Natural killer cell (primary cell): ENCODE measurements at regions of chr10 and their contacts with region 1.

Region 1: DNA sequence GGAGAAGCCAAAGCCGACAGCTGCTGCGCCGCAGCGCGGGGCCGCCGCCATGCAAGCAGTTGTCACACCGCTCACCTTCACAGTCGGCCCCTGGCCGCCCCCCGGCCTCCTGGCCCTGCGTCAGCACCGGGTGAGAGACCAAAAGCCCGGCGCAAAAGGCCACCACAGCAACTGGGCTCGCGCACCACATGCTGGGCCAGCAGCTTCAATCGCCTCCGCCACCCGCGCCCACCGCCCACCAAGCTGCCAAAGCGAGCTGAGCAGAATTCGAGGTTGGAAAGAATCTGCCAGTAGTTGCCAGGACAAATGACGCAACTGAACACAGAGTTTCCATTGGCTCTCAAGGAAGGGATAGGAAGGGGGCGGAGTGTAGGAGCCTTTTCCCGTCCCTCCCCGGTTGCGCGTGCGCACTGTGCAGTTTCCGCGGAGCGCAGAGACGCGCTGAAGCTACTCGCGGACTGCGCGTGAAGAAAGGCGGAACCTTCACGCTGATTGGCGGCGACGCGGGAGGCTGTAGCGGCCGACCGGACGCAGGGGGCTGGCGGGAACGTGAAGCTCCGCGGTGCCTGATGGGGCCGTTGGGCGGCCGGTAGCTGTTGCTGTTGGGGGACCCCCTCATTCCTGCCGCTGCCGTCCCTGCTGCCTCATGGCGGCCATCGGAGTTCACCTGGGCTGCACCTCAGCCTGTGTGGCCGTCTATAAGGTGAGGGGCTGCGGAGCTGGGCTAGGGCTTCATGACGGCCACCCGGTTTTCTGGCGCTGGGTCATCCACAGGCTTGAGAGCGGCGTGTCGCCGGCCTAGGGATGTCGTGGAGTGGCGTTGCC is at the starts of genes CDNF, HSPA14 and MSANTD7:
- DNase-seq: peak; percentile 98 to 100
- ATAC-seq: peak; percentile 92 to 99 (median 93)
- H3K4me3 ChIP-seq: peak within 1 kb of the TSS; percentile 95
- H3K4me3 Mint-ChIP-seq: peak within 1 kb of the TSS; percentile 95
- H3K27ac ChIP-seq: peak within 1 kb of the TSS; percentile 92
- H3K27ac Mint-ChIP-seq: peak within 1 kb of the TSS; percentile 91 to 98
- H3K4me1 ChIP-seq: peaks cover 20% of the 10 kb centered on the region
- H3K4me1 Mint-ChIP-seq: peaks cover 15 to 30% of the 10 kb centered on the region in 2 donors
- H3K27me3 ChIP-seq: no peaks in the 10 kb centered on the region
- H3K27me3 Mint-ChIP-seq: no peaks in the 10 kb centered on the region
- CTCF ChIP-seq: no peak
- total RNA-seq, gene CDNF: 1.8 to 2.2 (median 1.9) TPM
- total RNA-seq, gene HSPA14: 18.9 to 25.6 (median 24.5) TPM
- total RNA-seq, gene MSANTD7: 19.6 to 25.1 (median 24.0) TPM

Region 2: DNA sequence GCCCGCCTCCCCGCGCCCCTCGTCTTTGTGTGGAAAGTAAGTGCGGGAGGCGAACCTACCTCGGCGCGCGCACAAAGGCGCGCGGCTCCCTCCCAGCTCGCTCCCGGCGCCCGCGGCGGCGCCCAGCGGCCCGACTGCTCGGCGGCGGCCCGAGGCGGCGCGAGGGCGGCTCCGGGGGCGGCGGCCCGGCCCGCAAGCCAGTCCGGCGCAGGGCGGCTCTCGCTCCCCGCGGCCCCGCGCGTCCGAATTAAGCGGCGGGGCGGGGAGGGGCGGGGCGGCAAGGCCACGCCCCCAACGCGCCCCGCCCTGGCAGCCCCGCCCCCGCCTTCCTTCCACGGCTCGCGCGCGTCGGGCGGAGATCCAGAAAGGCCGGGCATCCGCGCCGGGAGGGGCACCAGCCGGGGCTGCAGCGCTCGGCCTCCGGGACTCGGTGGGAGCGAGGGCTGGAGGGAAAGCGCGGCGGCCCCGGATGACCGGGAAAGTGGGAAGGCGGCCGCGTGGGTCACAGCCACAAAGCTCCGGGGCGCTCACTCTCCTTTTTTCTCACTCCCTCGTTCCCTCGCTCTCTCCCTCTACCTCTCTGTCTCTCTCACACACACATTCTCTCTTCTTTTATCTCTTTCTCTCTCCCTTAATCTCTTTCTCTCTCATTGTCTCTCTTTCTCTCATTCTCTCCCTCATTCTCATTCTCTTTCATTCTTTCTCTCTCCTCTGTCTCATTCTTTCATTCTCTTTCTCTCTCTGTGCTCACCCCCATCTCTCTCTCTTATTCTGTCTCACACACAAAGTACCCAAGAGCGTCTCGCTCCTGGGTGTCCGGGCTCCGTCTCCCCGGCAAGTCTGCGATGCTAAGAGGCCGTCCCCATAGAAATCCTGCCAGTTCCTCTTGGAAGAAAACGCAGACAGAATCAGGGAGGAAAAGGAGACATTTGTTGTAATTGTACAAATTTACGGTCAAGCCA is 233.5 kb before region 1 on chr10:
- intact Hi-C with region 1: loop called (anchors 5 kb)
- DNase-seq: peak; percentile 72 to 86
- ATAC-seq: peak; percentile 81 to 92 (median 86)
- H3K4me3 ChIP-seq: peak overlapping the region; percentile 48
- H3K4me3 Mint-ChIP-seq: peak overlapping the region; percentile 90
- H3K27ac ChIP-seq: peak overlapping the region; percentile 50
- H3K27ac Mint-ChIP-seq: peak overlapping the region; percentile 57 to 88
- H3K4me1 ChIP-seq: peaks cover 27% of the 10 kb centered on the region
- H3K4me1 Mint-ChIP-seq: peaks cover 55% of the 10 kb centered on the region in 2 donors
- H3K27me3 ChIP-seq: no peaks in the 10 kb centered on the region
- H3K27me3 Mint-ChIP-seq: peaks cover 0 to 3% of the 10 kb centered on the region in 2 donors
- CTCF ChIP-seq: no peak

Region 3: DNA sequence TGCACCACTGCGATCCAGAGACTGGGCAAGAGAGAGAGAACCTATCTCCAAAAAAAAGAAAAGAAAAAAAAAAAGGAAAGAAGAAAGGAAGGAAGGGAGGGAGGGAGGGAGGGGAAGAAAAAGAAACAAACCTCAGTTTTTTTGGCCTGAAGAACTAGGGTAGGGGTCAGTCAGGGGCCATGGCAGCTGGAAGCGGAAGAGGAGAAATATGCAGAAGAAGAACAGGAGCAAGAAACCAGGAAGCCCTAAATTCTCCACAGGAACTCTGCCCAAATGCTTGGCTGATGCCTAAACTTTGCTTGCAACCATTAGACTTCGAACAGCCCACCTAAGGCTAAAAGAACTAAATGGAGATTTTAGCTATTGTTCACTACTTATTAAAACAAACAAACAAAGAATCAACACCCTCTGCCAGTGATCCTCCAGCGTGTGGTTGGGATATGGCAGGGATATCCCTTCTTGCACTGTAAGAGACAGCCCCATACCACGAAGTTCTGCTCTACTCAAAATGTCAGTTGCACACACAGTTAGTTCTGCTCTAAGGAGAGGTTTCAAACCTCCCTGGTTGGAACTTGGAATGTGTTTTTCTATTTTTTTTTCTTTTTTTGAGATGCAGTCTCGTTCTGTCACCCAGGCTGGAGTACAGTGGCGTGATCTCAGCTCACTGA is 202.8 kb before region 1 on chr10:
- intact Hi-C with region 1: no loop called
- DNase-seq: no peak
- ATAC-seq: no peak
- H3K4me3 ChIP-seq: no peak overlapping the region
- H3K4me3 Mint-ChIP-seq: no peak overlapping the region
- H3K27ac ChIP-seq: no peak overlapping the region
- H3K27ac Mint-ChIP-seq: no peak overlapping the region
- H3K4me1 ChIP-seq: no peaks in the 10 kb centered on the region
- H3K4me1 Mint-ChIP-seq: no peaks in the 10 kb centered on the region
- H3K27me3 ChIP-seq: no peaks in the 10 kb centered on the region
- H3K27me3 Mint-ChIP-seq: peaks cover 0 to 3% of the 10 kb centered on the region in 2 donors
- CTCF ChIP-seq: no peak

Region 4: GRCh38 chr10:14659626-14660196 is 178.3 kb before region 1 on chr10:
- intact Hi-C with region 1: loop called (anchors 5 kb)
- DNase-seq: peak; percentile 52 to 68
- ATAC-seq: peak; percentile 78 to 88 (median 87)
- H3K4me3 ChIP-seq: no peak overlapping the region
- H3K4me3 Mint-ChIP-seq: peak overlapping the region; percentile 82
- H3K27ac ChIP-seq: peak overlapping the region; percentile 77
- H3K27ac Mint-ChIP-seq: peak overlapping the region; percentile 84 to 93
- H3K4me1 ChIP-seq: peaks cover 39% of the 10 kb centered on the region
- H3K4me1 Mint-ChIP-seq: peaks cover 74 to 85% of the 10 kb centered on the region in 2 donors
- H3K27me3 ChIP-seq: no peaks in the 10 kb centered on the region
- H3K27me3 Mint-ChIP-seq: no peaks in the 10 kb centered on the region
- CTCF ChIP-seq: no peak

Region 5: GRCh38 chr10:14670551-14671240 is 167.3 kb before region 1 on chr10:
- intact Hi-C with region 1: no loop called
- DNase-seq: no peak
- ATAC-seq: no peak
- H3K4me3 ChIP-seq: no peak overlapping the region
- H3K4me3 Mint-ChIP-seq: no peak overlapping the region
- H3K27ac ChIP-seq: no peak overlapping the region
- H3K27ac Mint-ChIP-seq: no peak overlapping the region
- H3K4me1 ChIP-seq: no peaks in the 10 kb centered on the region
- H3K4me1 Mint-ChIP-seq: peaks cover 19 to 20% of the 10 kb centered on the region in 2 donors
- H3K27me3 ChIP-seq: no peaks in the 10 kb centered on the region
- H3K27me3 Mint-ChIP-seq: peaks cover 6 to 8% of the 10 kb centered on the region in 2 donors
- CTCF ChIP-seq: no peak

Region 6: DNA sequence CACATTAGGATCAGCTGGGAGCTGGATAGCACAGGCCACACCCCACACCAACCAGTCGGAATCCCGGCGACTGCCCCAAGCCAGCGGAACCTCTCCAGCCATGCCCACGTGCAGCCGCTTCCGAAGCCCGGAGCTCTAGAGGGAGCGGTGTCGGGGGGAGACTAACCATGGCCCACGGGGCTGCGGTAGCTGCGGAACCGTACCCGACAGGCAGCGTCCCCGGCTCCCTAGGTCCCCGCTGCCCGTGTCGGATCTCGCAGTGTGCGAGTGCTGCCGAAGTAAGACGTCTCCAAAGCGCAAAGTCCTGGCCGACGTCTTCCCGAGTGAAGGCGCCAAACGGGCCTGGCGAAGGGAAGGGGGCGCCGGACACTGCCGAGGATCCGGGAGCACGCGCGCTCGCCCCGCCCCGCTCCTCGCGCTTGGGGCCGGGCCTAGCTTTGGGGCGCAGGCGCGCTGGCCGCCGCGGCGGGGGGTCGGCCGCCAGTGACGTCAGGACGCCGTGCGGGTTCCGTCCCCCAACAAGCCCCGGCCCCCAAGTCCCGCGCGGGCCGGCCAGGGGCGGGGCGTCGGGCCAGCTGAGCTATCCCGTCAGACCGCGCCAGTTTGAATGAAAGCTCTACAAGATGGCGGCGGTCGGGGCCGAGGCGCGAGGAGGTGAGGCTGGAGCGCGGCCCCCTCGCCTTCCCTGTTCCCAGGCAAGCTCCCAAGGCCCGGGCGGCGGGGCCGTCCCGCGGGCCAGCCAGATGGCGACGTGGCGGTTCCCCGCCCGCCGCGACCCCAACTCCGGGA is 40.5 kb after region 1 on chr10 and contains the start of gene SUV39H2:
- intact Hi-C with region 1: loop called (anchors 1 kb)
- DNase-seq: peak; percentile 92 to 95
- ATAC-seq: peak; percentile 91 to 98 (median 94)
- H3K4me3 ChIP-seq: peak within 1 kb of the TSS; percentile 92
- H3K4me3 Mint-ChIP-seq: peak within 1 kb of the TSS; percentile 92
- H3K27ac ChIP-seq: peak within 1 kb of the TSS; percentile 59
- H3K27ac Mint-ChIP-seq: peak within 1 kb of the TSS; percentile 77 to 88
- H3K4me1 ChIP-seq: peaks cover 15% of the 10 kb centered on the region
- H3K4me1 Mint-ChIP-seq: peaks cover 26 to 28% of the 10 kb centered on the region in 2 donors
- H3K27me3 ChIP-seq: no peaks in the 10 kb centered on the region
- H3K27me3 Mint-ChIP-seq: no peaks in the 10 kb centered on the region
- CTCF ChIP-seq: no peak
- total RNA-seq, gene SUV39H2: 3.8 to 5.4 (median 5.2) TPM

Region 7: DNA sequence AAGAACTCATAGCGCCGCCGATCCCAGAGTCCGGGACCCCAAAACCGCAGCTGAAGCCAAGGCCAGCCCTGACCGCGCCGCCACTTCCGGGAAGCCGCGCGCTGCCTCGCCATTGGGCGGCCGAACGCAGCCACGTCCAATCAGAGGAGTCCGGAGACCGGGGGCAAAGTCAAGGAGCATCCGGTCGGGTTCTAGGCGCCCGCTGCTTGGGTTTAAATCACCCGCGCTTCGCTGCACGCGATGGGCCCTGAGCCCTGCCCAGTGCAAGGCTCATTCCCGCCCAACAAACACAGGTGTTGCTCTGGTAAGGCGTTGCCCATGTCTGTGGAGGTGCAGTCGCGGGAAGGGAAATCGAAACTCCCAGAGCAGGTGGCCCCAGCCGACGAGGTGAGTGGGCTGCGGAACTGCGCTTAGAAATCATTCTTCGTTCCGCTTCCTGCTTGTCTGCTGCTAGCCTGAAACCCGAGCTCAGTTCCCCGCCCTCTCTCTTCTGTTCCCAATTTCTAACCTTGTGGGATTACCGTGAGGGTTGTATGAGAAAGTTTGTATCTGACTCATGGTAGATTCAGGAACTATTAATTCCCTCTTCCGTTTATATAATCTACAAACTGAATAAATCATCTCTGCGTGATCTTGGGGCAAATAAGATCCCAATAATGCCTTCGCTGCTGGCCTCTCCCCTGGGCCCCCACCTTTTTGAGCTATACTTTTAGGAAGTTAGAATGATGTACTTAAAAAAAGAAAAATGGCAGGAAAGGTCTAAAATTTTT is 116.2 kb after region 1 on chr10 and contains the start of gene DCLRE1C:
- intact Hi-C with region 1: loop called (anchors 5 kb)
- DNase-seq: peak; percentile 88 to 92
- ATAC-seq: peak; percentile 90 to 97 (median 96)
- H3K4me3 ChIP-seq: peak within 1 kb of the TSS; percentile 86
- H3K4me3 Mint-ChIP-seq: peak within 1 kb of the TSS; percentile 97
- H3K27ac ChIP-seq: peak within 1 kb of the TSS; percentile 93
- H3K27ac Mint-ChIP-seq: peak within 1 kb of the TSS; percentile 94 to 95
- H3K4me1 ChIP-seq: peaks cover 34% of the 10 kb centered on the region
- H3K4me1 Mint-ChIP-seq: peaks cover 49 to 50% of the 10 kb centered on the region in 2 donors
- H3K27me3 ChIP-seq: no peaks in the 10 kb centered on the region
- H3K27me3 Mint-ChIP-seq: no peaks in the 10 kb centered on the region
- CTCF ChIP-seq: no peak
- total RNA-seq, gene DCLRE1C: 21.7 to 31.3 (median 22.3) TPM

Region 8: DNA sequence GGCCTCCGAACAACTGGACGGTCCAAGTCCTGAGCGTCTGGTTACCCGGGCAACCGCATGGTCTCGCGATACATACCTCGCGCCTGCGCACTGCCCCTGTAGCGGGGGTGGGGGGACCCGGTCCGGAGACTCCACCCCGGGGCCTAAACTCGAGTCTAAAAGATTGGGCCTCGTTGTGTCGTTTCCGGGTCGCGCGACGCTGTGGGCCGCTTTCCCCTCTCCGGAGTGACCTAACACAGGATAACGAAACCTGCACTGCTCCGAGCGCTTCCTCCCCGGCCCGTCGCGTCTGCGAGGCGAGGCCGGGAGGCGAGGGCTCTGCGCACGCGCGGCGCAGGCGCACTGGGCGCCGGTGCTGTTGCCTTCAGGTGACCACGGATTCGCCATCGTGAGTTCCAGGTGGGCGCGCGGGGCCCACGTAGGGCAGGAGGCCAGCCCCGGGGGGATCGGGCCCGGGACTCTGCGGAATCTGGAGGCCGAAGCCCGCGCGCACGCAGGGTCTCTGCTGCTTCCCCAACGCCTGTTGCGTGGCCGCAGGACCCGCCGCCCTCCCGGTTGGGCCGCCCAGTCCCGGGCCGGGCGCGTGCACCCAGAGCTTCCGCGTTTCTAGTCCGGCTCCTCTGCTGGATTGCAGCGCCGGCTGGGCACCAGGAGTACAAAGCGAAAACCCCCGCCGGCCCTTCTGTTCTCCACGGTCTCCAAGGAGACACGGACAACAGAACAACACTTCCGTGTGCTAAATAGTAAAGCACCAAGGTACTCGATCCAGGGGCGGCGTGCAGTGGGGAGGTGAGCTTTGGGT is 259.2 kb after region 1 on chr10 and contains the start of gene RPP38:
- intact Hi-C with region 1: loop called (anchors 1 kb)
- DNase-seq: peak; percentile 94 to 97
- ATAC-seq: peak; percentile 81 to 90 (median 82)
- H3K4me3 ChIP-seq: peak within 1 kb of the TSS; percentile 74
- H3K4me3 Mint-ChIP-seq: peak within 1 kb of the TSS; percentile 95
- H3K27ac ChIP-seq: peak within 1 kb of the TSS; percentile 94
- H3K27ac Mint-ChIP-seq: peak within 1 kb of the TSS; percentile 97 to 98
- H3K4me1 ChIP-seq: peaks cover 27% of the 10 kb centered on the region
- H3K4me1 Mint-ChIP-seq: peaks cover 27 to 41% of the 10 kb centered on the region in 2 donors
- H3K27me3 ChIP-seq: no peaks in the 10 kb centered on the region
- H3K27me3 Mint-ChIP-seq: no peaks in the 10 kb centered on the region
- CTCF ChIP-seq: no peak
- total RNA-seq, gene RPP38: 7.5 to 12.7 (median 8.4) TPM